Spleen (tissue), 13 donors: ENCODE measurements at regions of chr4 and their contacts with region 1.

Region 1: GRCh38 chr4:147866532-147867271 is 134.8 kb downstream of the ARHGAP10 start:
- DNase-seq: peak; percentile 91
- H3K4me3 ChIP-seq: no peak overlapping the region
- H3K27ac ChIP-seq: no peak overlapping the region
- H3K4me1 ChIP-seq: peaks cover 0 to 12% (median 1%) of the 10 kb centered on the region in 6 donors
- H3K27me3 ChIP-seq: no peaks in the 10 kb centered on the region
- CTCF ChIP-seq: peak; percentile 91 to 100 (median 97)
- POLR2A ChIP-seq: no peak

Region 2: GRCh38 chr4:147707865-147708672 is 158.6 kb before region 1 on chr4:
- intact Hi-C with region 1: loop called (anchors 2 kb)
- DNase-seq: no peak
- H3K4me3 ChIP-seq: no peak overlapping the region
- H3K27ac ChIP-seq: no peak overlapping the region
- H3K4me1 ChIP-seq: peaks cover 0 to 8% (median 1%) of the 10 kb centered on the region in 6 donors
- H3K27me3 ChIP-seq: no peaks in the 10 kb centered on the region
- CTCF ChIP-seq: peak in 10 of 11 experiments; percentile 61 to 86 (median 78)
- POLR2A ChIP-seq: no peak

Region 3: DNA sequence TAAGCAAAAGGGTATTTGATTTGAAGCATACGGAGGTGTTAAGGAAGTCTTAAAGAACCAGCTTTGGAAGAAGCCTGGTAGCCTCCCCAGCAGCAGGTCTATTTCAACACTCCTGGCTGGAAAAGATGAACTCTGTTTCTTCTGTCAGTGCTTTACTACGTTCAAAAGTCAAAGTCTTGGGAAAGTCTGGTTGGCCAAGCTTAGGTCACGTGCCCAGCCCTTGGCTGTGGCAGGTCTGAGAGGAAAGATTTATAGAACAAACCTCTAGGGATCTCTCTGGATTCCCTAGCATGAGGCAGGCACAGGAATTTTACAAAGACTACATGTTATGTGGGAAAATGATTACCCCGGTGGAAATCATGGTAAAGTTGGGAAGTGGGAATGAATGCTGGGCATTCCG is 143.4 kb before region 1 on chr4:
- intact Hi-C with region 1: no loop called
- DNase-seq: no peak
- H3K4me3 ChIP-seq: no peak overlapping the region
- H3K27ac ChIP-seq: no peak overlapping the region
- H3K4me1 ChIP-seq: no peaks in the 10 kb centered on the region
- H3K27me3 ChIP-seq: no peaks in the 10 kb centered on the region
- CTCF ChIP-seq: no peak
- POLR2A ChIP-seq: no peak